Cardiac septum (tissue), 1 donor: ENCODE measurements at regions of chr7 and their contacts with region 1.

Region 1: DNA sequence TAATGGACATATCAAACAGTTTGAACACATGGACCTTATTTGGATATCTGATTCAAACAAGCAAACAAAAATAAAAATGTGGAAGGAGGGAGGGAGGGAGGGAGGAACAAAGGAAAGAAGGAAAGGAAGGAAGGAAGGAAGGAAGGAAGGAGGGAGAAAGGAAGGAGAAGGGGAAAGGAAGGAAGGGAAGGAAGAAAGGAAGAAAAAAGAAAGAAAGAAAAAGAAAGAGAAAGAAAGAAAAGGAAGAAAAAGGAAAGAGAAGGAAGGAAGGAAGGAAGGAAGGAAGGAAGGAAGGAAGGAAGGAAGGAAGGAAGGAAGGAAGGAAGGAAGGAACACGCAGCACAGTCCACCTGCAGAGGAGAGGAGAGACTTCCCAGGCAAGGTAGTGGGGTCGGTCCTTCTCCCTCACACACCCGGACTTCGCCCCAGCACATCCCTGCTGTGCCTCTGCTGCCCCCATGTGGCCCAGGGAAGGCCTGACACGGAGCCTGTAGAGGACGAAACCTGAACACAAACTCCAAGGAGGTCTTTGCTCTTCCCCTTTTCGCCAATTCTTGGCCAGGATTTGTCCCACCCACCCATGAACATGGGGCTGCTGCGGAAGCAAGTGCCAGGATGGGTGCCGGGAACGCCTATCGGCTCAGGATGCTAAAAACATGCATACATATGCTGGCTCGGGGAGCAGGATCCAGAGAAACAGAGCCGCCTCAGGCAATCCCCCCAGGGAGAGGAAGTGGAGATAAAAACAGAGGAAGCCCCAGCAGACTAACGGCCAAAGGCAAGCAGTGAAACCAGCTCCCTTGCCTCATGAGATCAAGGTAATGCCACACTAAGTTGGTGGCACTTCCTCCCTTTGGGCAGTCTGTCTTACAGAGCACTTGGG is 52.3 kb upstream of the DGKI start:
- DNase-seq: peak; percentile 91

Region 2: DNA sequence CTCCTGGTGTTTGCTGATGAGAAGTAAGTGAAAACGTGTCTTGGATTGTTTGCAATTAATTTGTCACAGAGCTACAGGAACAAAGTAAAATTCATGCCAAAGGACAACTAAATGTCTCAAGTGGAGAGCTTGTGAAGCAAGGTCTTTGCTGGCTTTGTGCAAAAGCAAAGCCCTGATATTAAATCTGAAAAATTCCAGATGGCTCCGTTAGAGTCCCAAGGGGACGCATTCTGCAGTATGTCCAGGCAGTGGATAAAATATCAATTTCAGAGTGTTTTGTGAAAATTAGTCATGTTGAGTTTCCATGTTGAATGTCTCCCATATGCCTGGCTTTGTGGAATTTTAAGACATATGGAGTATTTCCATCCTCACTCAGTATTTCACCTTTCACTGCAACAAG is 453.1 kb before region 1 on chr7:
- intact Hi-C with region 1: no loop called
- DNase-seq: no peak

Region 3: DNA sequence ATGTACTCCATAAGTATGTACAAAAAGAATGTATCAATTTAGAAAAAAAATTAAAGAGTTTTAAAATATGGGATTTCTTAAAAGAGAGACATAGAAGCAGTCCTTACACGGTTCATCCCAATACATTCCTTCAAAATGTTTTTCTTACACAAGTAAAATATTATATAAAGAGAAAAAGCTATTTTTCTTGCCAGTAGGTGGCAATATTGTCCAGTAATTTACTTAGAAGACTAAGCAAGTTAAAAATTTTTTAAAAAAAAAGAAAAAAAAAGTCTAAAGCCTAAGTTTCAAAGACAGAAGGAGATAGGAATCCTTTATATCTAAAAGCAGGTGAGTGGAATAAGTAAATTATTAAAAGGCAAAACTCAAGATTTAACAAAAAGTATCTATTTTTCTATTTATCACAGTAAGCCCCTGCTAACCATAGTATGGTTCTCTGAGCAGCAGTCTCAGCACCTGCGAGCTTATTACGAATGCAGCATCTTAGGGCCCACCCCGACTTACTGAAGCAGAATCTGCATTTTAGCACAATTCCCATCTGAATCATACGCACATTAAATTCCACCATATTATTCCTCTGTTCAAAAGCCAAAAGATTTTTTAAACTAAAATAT is 292.9 kb before region 1 on chr7:
- intact Hi-C with region 1: loop called (anchors 5 kb)
- DNase-seq: no peak

Region 4: GRCh38 chr7:137656227-137656849 is 242.7 kb before region 1 on chr7:
- intact Hi-C with region 1: loop called (anchors 1 kb)
- DNase-seq: peak; percentile 84

Region 5: GRCh38 chr7:137816696-137817320 is 82.3 kb before region 1 on chr7:
- intact Hi-C with region 1: loop called (anchors 1 kb)
- DNase-seq: no peak

Region 6: GRCh38 chr7:137867289-137867688 is 31.8 kb before region 1 on chr7:
- intact Hi-C with region 1: loop called (anchors 2 kb)
- DNase-seq: no peak

Region 7: DNA sequence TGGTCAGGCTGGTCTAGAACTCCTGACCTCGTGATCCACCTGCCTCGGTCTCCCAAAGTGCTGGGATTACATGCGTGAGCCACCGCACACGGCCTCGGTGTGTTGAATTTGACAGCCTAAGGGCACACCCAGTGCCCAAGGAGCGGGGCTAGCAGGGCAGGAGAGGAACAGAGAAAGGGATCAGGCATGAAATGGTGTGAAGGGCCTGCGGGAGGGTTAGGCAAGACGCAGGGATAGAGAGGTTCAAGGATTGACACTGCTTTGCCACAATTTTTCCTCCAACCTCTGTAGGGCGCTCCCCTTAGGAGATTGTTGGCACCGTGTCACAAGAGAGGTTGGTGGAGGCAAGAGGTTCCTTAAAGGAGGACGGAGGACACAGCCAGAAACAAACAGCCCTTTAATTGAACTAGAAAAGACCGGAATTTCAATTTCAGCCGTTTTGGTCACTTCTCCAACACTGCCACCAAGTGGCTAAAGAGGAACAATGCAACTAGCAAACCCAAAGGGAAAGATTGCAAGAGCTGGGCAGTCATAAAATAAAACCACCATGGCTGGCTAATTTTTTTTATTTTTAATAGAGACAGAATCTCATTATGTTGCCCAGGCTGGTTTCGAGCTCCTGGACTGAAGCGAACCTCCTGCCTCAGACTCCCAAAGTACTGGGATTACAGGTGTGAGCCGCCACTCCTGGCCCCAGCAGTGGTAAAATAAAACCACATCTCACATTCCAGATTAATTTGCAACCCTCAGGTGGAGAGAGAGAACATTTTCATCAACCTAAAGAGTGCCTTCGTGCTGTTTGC is 109.7 kb after region 1 on chr7:
- intact Hi-C with region 1: loop called (anchors 1 kb)
- DNase-seq: no peak

Region 8: GRCh38 chr7:138738551-138739335 is 839.7 kb after region 1 on chr7:
- intact Hi-C with region 1: loop called (anchors 5 kb)
- DNase-seq: peak; percentile 87